H1 (cell line): ENCODE measurements at regions of chr5 and their contacts with region 1.

Region 1: GRCh38 chr5:132500931-132501630 is 10.5 kb upstream of the IRF1 start:
- DNase-seq: peak in 1 of 2 experiments; percentile 81
- H3K4me3 ChIP-seq: no peak overlapping the region
- H3K27ac ChIP-seq: no peak overlapping the region
- H3K4me1 ChIP-seq: peaks cover 0 to 7% (median 3%) of the 10 kb centered on the region in 4 experiments; a peak in 3 of 7 replicates
- H3K27me3 ChIP-seq: no peaks in the 10 kb centered on the region
- CTCF ChIP-seq: peak in 2 of 3 experiments; percentile 82 to 89; a peak in 3 of 4 replicates
- EP300 ChIP-seq: no peak
- POLR2A ChIP-seq: no peak
- RAD21 ChIP-seq: peak; percentile 92 to 94

Region 2: DNA sequence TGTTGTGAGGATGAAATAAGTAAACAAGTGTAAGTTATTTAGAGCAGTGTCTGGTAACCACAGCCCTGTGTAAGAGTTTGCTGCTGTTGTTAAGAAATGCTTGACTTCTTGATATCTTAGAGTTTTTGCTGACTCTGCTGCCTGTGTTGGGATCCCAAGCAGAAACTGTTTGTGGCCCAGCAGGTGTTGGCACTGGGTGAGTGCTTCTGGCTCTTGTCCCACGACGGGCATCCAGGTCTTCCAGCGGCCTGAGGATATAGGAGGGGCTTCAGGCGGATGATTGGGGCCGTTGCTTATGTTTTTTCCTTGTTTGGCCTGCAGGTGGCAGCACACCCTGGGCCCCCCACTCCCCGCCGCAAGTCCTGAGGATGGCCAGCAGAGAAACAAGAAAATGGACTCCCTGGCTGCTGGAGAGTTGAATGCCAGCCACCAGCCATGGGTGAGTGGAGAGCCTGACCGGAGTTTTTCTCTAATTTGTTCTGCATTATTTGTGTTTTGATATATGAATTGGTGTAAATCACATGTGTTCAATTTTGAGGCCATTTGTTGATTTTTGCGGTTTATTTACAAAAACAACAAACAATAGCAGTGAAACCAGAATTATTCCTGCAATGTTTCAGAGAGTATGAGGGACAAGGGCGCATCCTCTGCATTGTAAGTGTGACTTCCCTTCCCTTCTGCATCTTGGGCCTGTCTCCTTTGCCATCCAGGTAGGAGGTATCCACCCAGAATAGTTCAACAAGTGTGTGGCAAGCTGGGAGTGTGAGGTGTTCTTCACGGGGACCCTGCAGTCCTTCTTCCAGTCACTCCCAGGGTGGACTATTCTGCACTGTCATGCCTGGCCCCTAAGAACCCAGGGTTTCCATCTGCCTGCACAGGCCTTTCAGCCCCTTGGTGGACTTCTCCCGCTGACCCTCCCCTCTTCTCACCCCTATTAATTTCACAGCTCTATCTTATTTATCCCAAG is 81.3 kb before region 1 on chr5:
- CTCF ChIA-PET with region 1: interaction called, 201 read pairs
- POLR2A ChIA-PET with region 1: interaction called, 6 read pairs
- DNase-seq: peak in 1 of 2 experiments; percentile 84
- H3K4me3 ChIP-seq: no peak overlapping the region
- H3K27ac ChIP-seq: no peak overlapping the region
- H3K4me1 ChIP-seq: peaks cover 0 to 2% (median 1%) of the 10 kb centered on the region in 4 experiments; a peak in 2 of 7 replicates
- H3K27me3 ChIP-seq: no peaks in the 10 kb centered on the region
- CTCF ChIP-seq: peak; percentile 64 to 92 (median 83)
- EP300 ChIP-seq: 0 out of 3 replicates have a peak, but pooled peaks of 1 of the 2 experiments have one; percentile 15
- POLR2A ChIP-seq: no peak
- RAD21 ChIP-seq: peak; percentile 78 to 86

Region 3: GRCh38 chr5:132456296-132457001 is 44.6 kb before region 1 on chr5:
- CTCF ChIA-PET with region 1: interaction called, 10 read pairs
- POLR2A ChIA-PET with region 1: interaction called, 5 read pairs
- DNase-seq: no peak
- H3K4me3 ChIP-seq: no peak overlapping the region
- H3K27ac ChIP-seq: no peak overlapping the region
- H3K4me1 ChIP-seq: peaks cover 1 to 17% (median 5%) of the 10 kb centered on the region in 4 experiments; a peak in 6 of 7 replicates
- H3K27me3 ChIP-seq: peaks cover 0 to 1% (median 0%) of the 10 kb centered on the region in 4 experiments; a peak in 1 of 7 replicates
- CTCF ChIP-seq: no peak
- EP300 ChIP-seq: no peak
- POLR2A ChIP-seq: no peak
- RAD21 ChIP-seq: no peak

Region 4: GRCh38 chr5:132473019-132473531 is 28.0 kb before region 1 on chr5:
- CTCF ChIA-PET with region 1: interaction called, 77 read pairs
- POLR2A ChIA-PET with region 1: interaction called, 13 read pairs
- DNase-seq: no peak
- H3K4me3 ChIP-seq: no peak overlapping the region
- H3K27ac ChIP-seq: no peak overlapping the region
- H3K4me1 ChIP-seq: peaks cover 0 to 10% (median 0%) of the 10 kb centered on the region in 4 experiments; a peak in 2 of 7 replicates
- H3K27me3 ChIP-seq: no peaks in the 10 kb centered on the region
- CTCF ChIP-seq: no peak
- EP300 ChIP-seq: no peak
- POLR2A ChIP-seq: no peak
- RAD21 ChIP-seq: no peak